ENCODE measurements at regions of chr7 and their contacts with region 1.

Region 1: GRCh38 chr7:90155206-90155605 is 937 bp downstream of the STEAP1 start:
- DNase-seq: no peak

Region 2: DNA sequence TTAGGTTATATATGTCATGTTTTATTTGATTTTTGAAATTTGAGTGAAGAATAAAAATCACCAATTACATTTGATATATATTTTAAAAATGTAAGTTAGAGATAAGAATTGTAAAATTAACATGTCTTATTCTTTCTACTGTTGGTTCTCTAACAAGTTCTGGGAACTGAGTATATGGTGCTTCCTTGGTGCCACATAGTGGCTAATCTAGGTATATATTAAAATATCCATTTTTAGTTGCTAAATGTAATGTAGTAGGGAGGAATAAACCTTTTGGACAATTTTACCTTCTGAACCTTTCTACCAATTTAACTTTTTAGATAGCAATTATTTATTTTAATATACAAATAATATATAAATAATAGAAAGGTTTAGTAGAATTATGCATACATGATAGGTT is 107.2 kb after region 1 on chr7:
- intact Hi-C with region 1: loop called (anchors 5 kb)
- DNase-seq: no peak

Region 3: GRCh38 chr7:90424720-90425119 is 269.5 kb after region 1 on chr7:
- intact Hi-C with region 1: loop called (anchors 5 kb)
- DNase-seq: no peak

Measured in head of caudate nucleus (tissue), 42 donors.